Prostate gland (tissue), 2 donors: ENCODE measurements at regions of chr18 and their contacts with region 1.

Region 1: GRCh38 chr18:58911766-58912165 is 47.1 kb downstream of the ZNF532 start:
- DNase-seq: no peak
- H3K4me3 ChIP-seq: no peak overlapping the region
- H3K27ac ChIP-seq: peak overlapping the region; percentile 58 to 65
- H3K4me1 ChIP-seq: no peaks in the 10 kb centered on the region
- H3K27me3 ChIP-seq: no peaks in the 10 kb centered on the region
- CTCF ChIP-seq: no peak
- POLR2A ChIP-seq: no peak

Region 2: GRCh38 chr18:58864146-58865032 is 47.4 kb before region 1 on chr18 and contains the start of gene ZNF532:
- intact Hi-C with region 1: loop called (anchors 5 kb)
- DNase-seq: peak; percentile 63
- H3K4me3 ChIP-seq: peak within 1 kb of the TSS; percentile 31 to 55
- H3K27ac ChIP-seq: peak within 1 kb of the TSS; percentile 98 to 100
- H3K4me1 ChIP-seq: peaks cover 12% of the 10 kb centered on the region
- H3K27me3 ChIP-seq: no peaks in the 10 kb centered on the region
- CTCF ChIP-seq: no peak
- POLR2A ChIP-seq: no peak
- total RNA-seq, gene ZNF532: 231 to 299 TPM

Region 3: GRCh38 chr18:58967751-58968254 is 56.0 kb after region 1 on chr18:
- intact Hi-C with region 1: loop called (anchors 5 kb)
- DNase-seq: no peak
- H3K4me3 ChIP-seq: no peak overlapping the region
- H3K27ac ChIP-seq: peak overlapping the region; percentile 82 to 87
- H3K4me1 ChIP-seq: peaks cover 13% of the 10 kb centered on the region
- H3K27me3 ChIP-seq: no peaks in the 10 kb centered on the region
- CTCF ChIP-seq: no peak
- POLR2A ChIP-seq: no peak

Region 4: GRCh38 chr18:59052965-59053820 is 141.4 kb after region 1 on chr18:
- intact Hi-C with region 1: no loop called
- DNase-seq: peak; percentile 77
- H3K4me3 ChIP-seq: no peak overlapping the region
- H3K27ac ChIP-seq: peak overlapping the region; percentile 90 to 95
- H3K4me1 ChIP-seq: peaks cover 18% of the 10 kb centered on the region
- H3K27me3 ChIP-seq: no peaks in the 10 kb centered on the region
- CTCF ChIP-seq: no peak
- POLR2A ChIP-seq: no peak